ENCODE measurements at regions of chr11 and their contacts with region 1.

Region 1: DNA sequence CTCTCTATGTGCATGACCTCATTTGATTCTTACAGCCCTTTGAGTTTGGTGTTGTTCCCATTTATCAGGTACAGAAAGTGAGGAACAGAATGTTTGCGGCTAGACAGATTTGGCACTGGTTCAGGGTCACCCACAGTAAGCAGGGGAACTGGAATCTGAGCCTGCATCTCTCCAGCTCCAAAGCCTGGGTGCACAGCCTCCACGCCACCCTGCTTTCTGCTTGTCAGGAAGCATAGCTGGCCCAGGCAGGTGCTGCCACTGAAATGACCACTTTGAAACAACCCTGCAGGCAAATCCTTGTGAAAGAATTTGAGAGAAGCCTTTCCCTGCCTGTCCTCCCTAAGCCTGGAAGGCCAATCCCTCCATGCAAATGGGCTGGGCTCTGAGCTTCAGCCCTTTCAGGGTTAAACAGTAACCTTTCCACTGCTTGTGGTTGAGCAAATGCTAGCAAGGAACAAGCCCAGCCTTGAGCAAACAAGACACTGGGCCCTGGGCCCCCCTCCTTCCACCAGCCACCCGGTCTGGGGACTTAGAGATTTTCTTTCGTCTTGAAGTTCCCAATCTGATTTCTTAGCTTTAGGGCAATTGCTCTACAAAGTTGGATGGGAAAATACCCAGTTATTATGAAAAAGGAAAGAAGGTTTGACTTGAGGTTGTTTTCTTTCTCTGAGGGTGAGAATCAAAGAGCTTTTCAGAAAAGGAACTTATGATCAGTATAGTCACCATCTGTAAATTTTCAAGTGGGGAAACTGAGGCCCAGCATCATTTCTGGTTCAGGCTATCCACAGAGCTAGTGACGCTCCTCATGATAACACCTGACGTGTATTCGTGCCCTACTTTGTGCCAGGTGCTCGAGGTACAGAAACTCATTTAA is 19.4 kb downstream of the EHF start:
- DNase-seq: peak; percentile 96 to 98
- ATAC-seq: peak; percentile 96 to 98
- H3K4me3 ChIP-seq: no peak overlapping the region
- H3K27ac ChIP-seq: peak overlapping the region; percentile 94 to 99
- H3K4me1 ChIP-seq: peaks cover 88% of the 10 kb centered on the region
- CTCF ChIP-seq: no peak; the same call in 2 of the 3 replicates
- EP300 ChIP-seq: peak; percentile 83 to 90; a peak in 3 of 5 replicates
- POLR2A ChIP-seq: peak; percentile 33; the same call in 1 of the 2 replicates
- RAD21 ChIP-seq: peak; percentile 39 to 69; a peak in 4 of 5 replicates

Region 2: GRCh38 chr11:34599406-34599901 is 40.8 kb before region 1 on chr11:
- CTCF ChIA-PET with region 1: interaction called, 5 read pairs
- POLR2A ChIA-PET with region 1: interaction called, 74 read pairs
- DNase-seq: peak; percentile 76 to 88
- ATAC-seq: peak; percentile 44 to 57
- H3K4me3 ChIP-seq: no peak overlapping the region
- H3K27ac ChIP-seq: peak overlapping the region; percentile 98 to 99
- H3K4me1 ChIP-seq: peaks cover 57% of the 10 kb centered on the region
- CTCF ChIP-seq: no peak
- EP300 ChIP-seq: peak; percentile 84 to 96; a peak in 4 of 5 replicates
- POLR2A ChIP-seq: no peak
- RAD21 ChIP-seq: peak in 1 of 2 experiments; percentile 49; a peak in 3 of 5 replicates

Region 3: GRCh38 chr11:34890812-34891211 is 250.5 kb after region 1 on chr11:
- CTCF ChIA-PET with region 1: interaction called, 15 read pairs
- POLR2A ChIA-PET with region 1: no interaction called
- DNase-seq: peak in 1 of 2 experiments; percentile 68
- ATAC-seq: peak in 1 of 2 experiments; percentile 67; a peak in 3 of 6 replicates
- H3K4me3 ChIP-seq: no peak overlapping the region
- H3K27ac ChIP-seq: peak overlapping the region; percentile 71 to 76
- H3K4me1 ChIP-seq: peaks cover 43% of the 10 kb centered on the region
- CTCF ChIP-seq: peak; percentile 81
- EP300 ChIP-seq: no peak
- POLR2A ChIP-seq: no peak
- RAD21 ChIP-seq: peak; percentile 88 to 95

Measured in A549 (cell line).